Endothelial cell of umbilical vein (primary cell): ENCODE measurements at regions of chr1 and their contacts with region 1.

Region 1: DNA sequence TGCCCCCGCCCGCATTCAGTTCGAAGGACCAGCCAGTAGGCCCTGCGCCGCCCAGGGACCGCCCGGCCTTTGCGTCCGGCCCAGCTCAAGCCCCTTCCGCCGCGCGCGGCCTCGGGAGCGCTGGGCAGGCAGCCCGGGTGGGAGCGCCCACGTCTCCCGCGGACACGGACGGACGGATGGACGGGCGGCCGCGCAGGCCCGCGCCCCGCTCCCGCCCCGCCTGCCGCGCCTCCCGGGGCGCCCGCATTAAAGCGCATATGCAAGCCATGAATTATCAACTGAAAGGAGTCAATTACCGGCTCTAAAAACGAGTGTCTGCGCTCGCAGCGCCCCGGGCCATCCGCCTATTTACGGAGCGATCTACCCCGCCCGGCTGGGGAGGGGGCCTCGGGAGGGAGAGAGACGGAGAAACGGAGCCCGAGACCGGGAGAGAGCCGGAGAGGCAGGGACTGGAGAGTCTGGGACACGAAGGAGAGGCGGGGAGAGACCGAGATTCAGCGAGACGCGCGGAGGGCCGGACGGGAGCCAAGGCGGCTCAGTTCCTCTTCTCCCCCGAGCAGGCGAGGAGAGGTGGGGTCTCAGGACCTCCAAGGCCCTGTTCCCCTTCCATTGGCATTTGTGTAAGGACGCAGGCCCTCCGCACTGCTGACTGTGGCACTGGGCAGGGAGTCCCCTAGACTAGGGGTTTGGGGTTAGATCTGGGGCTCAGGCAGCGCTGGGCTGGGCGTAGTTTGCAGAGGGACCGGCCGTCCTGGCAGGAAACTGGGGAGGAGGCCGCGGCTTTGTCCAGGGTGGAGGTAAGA is 41.3 kb upstream of the DMBX1 start:
- DNase-seq: no peak
- H3K4me3 ChIP-seq: peak overlapping the region in 1 of 3 experiments; percentile 31
- H3K27ac ChIP-seq: no peak overlapping the region
- H3K4me1 ChIP-seq: no peaks in the 10 kb centered on the region
- H3K27me3 ChIP-seq: peaks cover 55 to 64% of the 10 kb centered on the region in 2 experiments
- CTCF ChIP-seq: no peak
- POLR2A ChIP-seq: no peak

Region 2: GRCh38 chr1:46466477-46467182 is 18.3 kb after region 1 on chr1:
- CTCF ChIA-PET with region 1: interaction called, 9 read pairs
- POLR2A ChIA-PET with region 1: no interaction called
- dilution Hi-C with region 1: no loop called
- intact Hi-C with region 1: loop called (anchors 2 kb)
- DNase-seq: no peak
- H3K4me3 ChIP-seq: peak overlapping the region; percentile 7 to 33 (median 8)
- H3K27ac ChIP-seq: no peak overlapping the region
- H3K4me1 ChIP-seq: peaks cover 3% of the 10 kb centered on the region
- H3K27me3 ChIP-seq: peaks cover 35 to 45% of the 10 kb centered on the region in 2 experiments
- CTCF ChIP-seq: no peak
- POLR2A ChIP-seq: no peak

Region 3: GRCh38 chr1:46757241-46757959 is 309.1 kb after region 1 on chr1:
- CTCF ChIA-PET with region 1: no interaction called
- POLR2A ChIA-PET with region 1: no interaction called
- dilution Hi-C with region 1: no loop called
- intact Hi-C with region 1: no loop called
- DNase-seq: no peak
- H3K4me3 ChIP-seq: no peak overlapping the region
- H3K27ac ChIP-seq: no peak overlapping the region
- H3K4me1 ChIP-seq: peaks cover 18% of the 10 kb centered on the region
- H3K27me3 ChIP-seq: peaks cover 0 to 2% of the 10 kb centered on the region in 2 experiments
- CTCF ChIP-seq: no peak
- POLR2A ChIP-seq: no peak